Heart left ventricle (tissue), 16 donors: ENCODE measurements at regions of chr20 and their contacts with region 1.

Region 1: GRCh38 chr20:25247956-25248785 is at the start of gene PYGB:
- DNase-seq: peak; percentile 79 to 89 (median 83)
- ATAC-seq: peak; percentile 33 to 91 (median 76)
- H3K4me3 ChIP-seq: peak within 1 kb of the TSS; percentile 72 to 99 (median 92)
- H3K27ac ChIP-seq: peak within 1 kb of the TSS; percentile 86 to 99 (median 96)
- H3K4me1 ChIP-seq: peaks cover 0 to 61% (median 34%) of the 10 kb centered on the region in 12 donors
- H3K27me3 ChIP-seq: no peaks in the 10 kb centered on the region
- CTCF ChIP-seq: no peak
- POLR2A ChIP-seq: peak; percentile 79 to 97
- total RNA-seq, gene PYGB: 172 to 450 (median 233) TPM

Region 2: DNA sequence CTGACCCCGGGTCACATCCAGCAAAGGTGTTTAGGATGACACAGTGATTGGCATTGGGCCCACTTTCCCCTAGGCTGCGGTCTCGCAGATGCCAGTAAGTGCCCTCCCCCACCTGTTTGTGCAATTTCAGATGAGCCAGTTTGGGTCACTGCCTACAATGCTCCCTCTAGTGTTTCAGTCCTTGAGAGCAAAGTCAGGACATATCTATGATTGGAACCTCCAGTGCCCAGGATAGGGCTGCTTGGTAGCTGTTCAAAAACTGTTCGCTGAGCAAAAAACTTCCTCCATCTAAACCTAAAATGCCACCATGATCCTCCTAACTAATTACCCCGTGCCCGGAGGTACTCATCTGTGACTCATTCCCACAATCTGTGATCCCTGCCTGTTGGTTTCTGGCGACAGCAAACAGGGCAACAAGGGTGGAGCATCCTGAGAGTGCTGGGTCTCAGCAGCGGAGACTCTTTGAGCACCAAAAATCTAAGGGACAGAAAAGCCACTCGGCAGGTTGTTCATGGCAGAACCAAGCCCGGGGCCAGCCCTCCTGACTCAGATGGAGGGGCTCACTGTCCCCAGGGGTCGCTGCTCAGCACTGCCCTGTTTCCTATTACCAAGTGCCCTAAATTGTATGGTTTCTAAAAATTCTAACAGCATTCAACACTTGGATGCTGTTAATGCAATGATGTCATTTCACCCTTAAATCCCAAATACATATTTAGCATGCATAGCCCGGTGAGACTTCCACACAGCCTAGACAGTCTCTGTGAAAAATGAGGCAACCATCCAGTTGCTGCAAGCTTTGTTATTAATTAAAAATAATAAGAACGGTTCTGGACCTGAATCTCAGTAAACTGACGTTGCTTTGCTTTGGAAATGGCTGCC is 171.2 kb before region 1 on chr20:
- intact Hi-C with region 1: loop called in 1 of 10 experiments (anchors 5 kb)
- DNase-seq: no peak
- ATAC-seq: peak in 3 of 4 donors; percentile 43 to 48 (median 45)
- H3K4me3 ChIP-seq: peak overlapping the region in 11 of 12 donors; percentile 5 to 47 (median 39)
- H3K27ac ChIP-seq: no peak overlapping the region
- H3K4me1 ChIP-seq: peaks cover 0 to 25% (median 13%) of the 10 kb centered on the region in 12 donors
- H3K27me3 ChIP-seq: peaks cover 14 to 79% (median 27%) of the 10 kb centered on the region in 9 donors
- CTCF ChIP-seq: peak in 6 of 12 donors; percentile 11 to 32 (median 20)
- POLR2A ChIP-seq: no peak

Region 3: DNA sequence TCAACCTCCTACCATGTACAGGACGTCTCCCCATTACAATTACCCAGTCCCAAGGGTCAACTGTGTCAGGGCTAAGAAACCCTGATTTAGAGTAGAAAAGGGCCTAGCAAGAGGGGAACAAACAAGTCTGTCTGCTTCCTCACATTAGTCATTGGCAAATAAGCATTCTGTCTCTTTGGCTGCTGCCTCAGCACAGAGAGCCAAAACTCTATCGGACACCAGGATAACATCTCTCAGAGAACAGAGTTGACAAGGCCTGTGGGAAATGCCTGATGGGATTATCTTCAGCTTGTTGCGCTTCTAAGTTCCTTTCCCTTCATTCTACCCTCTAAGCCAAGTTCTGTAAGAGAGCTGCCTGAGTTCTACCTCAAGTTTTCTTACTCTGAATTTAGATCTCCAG is 147.3 kb before region 1 on chr20:
- intact Hi-C with region 1: no loop called
- DNase-seq: no peak
- ATAC-seq: peak; percentile 42 to 75 (median 64)
- H3K4me3 ChIP-seq: no peak overlapping the region
- H3K27ac ChIP-seq: no peak overlapping the region
- H3K4me1 ChIP-seq: peaks cover 0 to 8% (median 0%) of the 10 kb centered on the region in 12 donors
- H3K27me3 ChIP-seq: peaks cover 0 to 8% (median 0%) of the 10 kb centered on the region in 9 donors
- CTCF ChIP-seq: no peak
- POLR2A ChIP-seq: no peak

Region 4: DNA sequence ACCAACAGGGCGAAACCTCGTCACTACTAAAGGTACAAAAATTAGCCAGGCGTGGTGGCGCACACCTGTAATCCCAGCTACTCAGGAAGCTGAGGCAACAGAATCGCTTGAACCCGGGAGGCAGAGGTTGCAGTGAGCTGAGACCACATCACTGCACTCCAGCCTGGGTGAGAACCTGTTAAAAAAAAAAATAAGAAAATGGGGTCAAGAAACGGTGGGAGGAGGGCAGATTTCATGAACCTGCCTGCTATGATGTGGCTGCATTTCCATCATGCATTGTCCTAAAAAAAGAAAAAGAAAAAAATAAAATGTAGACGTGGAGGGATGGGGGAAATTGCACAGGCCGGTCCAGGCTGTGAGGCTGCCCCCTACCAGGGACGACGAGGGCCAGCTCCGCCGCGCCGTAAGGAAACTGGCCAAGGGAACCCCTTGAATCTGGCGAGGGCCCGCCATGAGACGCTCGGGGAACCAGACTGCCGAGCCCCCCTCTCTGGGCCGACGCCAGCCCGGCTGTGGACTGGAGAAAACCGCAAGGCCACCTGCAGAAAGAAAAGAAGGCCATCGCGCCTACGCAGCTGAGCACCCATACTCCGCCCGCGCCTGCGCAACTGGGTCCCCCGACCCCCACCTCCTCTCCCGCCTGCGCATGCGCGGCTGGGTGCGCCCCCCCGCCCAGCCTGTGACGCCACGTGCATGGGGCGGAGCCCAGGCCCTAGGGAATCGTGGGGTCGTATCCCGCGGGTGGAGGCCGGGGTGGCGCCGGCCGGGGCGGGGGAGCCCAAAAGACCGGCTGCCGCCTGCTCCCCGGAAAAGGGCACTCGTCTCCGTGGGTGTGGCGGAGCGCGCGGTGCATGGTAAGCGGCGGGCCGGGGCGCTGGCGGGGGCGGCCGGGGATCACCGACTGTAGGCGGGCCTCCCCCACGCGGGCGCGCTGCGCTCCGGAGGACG is 52.9 kb before region 1 on chr20 and contains the start of gene ENTPD6:
- intact Hi-C with region 1: loop called in 9 of 10 experiments (anchors 2 to 5 kb)
- DNase-seq: peak; percentile 94 to 97 (median 94)
- ATAC-seq: peak; percentile 71 to 88 (median 88)
- H3K4me3 ChIP-seq: peak within 1 kb of the TSS; percentile 63 to 99 (median 90)
- H3K27ac ChIP-seq: peak within 1 kb of the TSS; percentile 79 to 98 (median 93)
- H3K4me1 ChIP-seq: peaks cover 0 to 70% (median 42%) of the 10 kb centered on the region in 12 donors
- H3K27me3 ChIP-seq: no peaks in the 10 kb centered on the region
- CTCF ChIP-seq: peak in 6 of 12 donors; percentile 15 to 52 (median 40)
- POLR2A ChIP-seq: peak; percentile 52 to 85
- total RNA-seq, gene ENTPD6: 58.7 to 139 (median 86.7) TPM

Region 5: DNA sequence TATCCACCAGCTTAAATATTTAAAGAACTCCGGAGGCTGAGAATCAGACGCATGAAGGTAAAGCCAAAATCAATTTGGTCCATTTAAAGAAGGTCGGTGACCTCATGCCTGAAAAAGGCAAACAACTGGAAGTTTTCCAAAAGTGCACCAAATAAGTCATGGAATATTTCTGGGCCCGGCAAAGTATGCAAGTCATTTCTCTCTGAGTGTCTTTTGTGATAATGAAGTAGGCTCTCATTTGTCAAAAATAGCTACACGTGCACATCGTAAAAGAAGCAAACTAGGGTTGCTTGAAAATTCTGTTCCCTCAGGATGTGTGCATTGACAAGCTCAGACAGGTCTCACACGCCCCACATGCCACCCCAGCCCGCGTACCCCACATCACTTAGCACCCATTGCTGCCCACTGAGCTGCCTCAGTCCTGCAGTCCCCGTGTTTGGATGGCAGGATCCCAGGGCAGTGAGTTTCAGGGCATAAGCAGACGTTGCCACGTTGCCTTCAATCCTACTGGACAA is 20.8 kb before region 1 on chr20:
- intact Hi-C with region 1: loop called in 2 of 10 experiments (anchors 1 to 2 kb)
- DNase-seq: peak in 2 of 5 donors; percentile 67 to 70
- ATAC-seq: peak; percentile 47 to 73 (median 55)
- H3K4me3 ChIP-seq: no peak overlapping the region
- H3K27ac ChIP-seq: peak overlapping the region; percentile 74 to 96 (median 86)
- H3K4me1 ChIP-seq: peaks cover 10 to 80% (median 41%) of the 10 kb centered on the region in 12 donors
- H3K27me3 ChIP-seq: no peaks in the 10 kb centered on the region
- CTCF ChIP-seq: no peak
- POLR2A ChIP-seq: no peak